ENCODE measurements at regions of chr11 and their contacts with region 1.

Region 1: DNA sequence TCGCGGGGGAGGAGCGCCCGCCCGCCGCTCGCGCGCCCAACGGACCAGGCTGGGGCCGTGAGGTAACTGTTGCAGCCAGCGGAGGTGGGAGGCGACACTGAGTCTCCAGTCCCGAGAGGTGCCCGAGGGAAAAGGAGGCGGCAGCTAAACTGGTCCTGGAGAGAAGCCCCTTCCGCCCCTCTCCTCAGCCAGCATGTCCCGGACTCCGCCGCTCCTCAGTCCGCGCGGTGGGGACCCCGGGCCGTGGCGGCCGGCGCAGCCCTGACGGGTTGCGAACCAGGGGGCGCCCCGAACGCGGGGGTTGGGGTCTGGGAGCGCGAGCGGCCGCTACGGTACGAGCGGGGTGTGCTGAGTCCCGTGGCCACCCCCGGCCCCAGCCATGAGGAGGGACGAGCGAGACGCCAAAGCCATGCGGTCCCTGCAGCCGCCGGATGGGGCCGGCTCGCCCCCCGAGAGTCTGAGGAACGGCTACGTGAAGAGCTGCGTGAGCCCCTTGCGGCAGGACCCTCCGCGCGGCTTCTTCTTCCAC is at the start of gene PDE3B:
- DNase-seq: peak; percentile 91
- H3K4me3 ChIP-seq: peak within 1 kb of the TSS; percentile 88
- H3K27ac ChIP-seq: peak within 1 kb of the TSS; percentile 92
- H3K4me1 ChIP-seq: no peaks in the 10 kb centered on the region
- H3K27me3 ChIP-seq: no peaks in the 10 kb centered on the region
- CTCF ChIP-seq: no peak
- total RNA-seq, gene PDE3B: 21.5 to 23.6 TPM

Region 2: GRCh38 chr11:14544611-14545010 is 99.2 kb before region 1 on chr11:
- intact Hi-C with region 1: loop called (anchors 10 kb)
- DNase-seq: no peak
- H3K4me3 ChIP-seq: no peak overlapping the region
- H3K27ac ChIP-seq: no peak overlapping the region
- H3K4me1 ChIP-seq: peaks cover 4% of the 10 kb centered on the region
- H3K27me3 ChIP-seq: no peaks in the 10 kb centered on the region
- CTCF ChIP-seq: no peak

Region 3: GRCh38 chr11:14892036-14892567 is 248.3 kb after region 1 on chr11 and contains the start of gene CYP2R1:
- intact Hi-C with region 1: loop called (anchors 10 kb)
- DNase-seq: peak; percentile 99
- H3K4me3 ChIP-seq: peak within 1 kb of the TSS; percentile 75
- H3K27ac ChIP-seq: peak within 1 kb of the TSS; percentile 99
- H3K4me1 ChIP-seq: no peaks in the 10 kb centered on the region
- H3K27me3 ChIP-seq: no peaks in the 10 kb centered on the region
- CTCF ChIP-seq: no peak
- total RNA-seq, gene CYP2R1: 11.1 to 17.7 TPM